ENCODE measurements at regions of chr15 and their contacts with region 1.

Region 1: GRCh38 chr15:78065284-78065872 is 12.1 kb downstream of the TBC1D2B start:
- DNase-seq: no peak
- ATAC-seq: no peak
- H3K4me3 Mint-ChIP-seq: no peak overlapping the region
- H3K27ac Mint-ChIP-seq: no peak overlapping the region
- H3K4me1 Mint-ChIP-seq: peaks cover 11% of the 10 kb centered on the region
- H3K27me3 Mint-ChIP-seq: no peaks in the 10 kb centered on the region
- CTCF ChIP-seq: no peak

Region 2: DNA sequence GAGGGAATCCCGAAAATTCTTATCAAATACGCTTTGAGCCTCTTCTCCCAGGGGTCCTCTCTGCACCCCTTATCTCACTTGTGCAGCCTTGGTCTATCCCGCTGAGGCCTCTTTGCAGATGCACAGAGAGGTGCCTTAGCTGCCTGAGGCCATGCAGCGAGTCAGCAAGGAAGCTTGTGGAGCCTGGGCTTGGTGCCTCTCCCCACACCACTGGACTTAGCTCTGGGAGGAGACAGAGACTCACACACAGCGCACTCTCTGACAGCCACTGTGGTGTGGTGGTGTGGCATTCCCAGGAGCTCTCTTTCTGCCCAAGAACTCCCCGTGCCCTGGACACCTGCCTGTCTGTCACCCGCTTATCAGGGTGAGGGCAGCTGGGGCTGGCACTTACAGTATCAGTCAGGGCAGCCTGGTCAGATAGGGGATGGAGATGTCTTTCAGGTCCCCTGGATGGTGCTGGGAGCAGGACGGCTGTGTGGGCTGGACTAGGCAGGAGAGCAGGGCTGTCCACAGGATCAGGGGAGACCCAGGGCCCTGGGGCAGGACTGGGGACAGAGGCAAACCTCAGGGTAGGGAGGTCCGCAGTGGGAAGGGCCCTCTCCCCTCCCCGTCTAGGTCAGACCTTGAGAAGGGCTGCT is 422.5 kb before region 1 on chr15:
- CTCF ChIA-PET with region 1: no interaction called
- POLR2A ChIA-PET with region 1: no interaction called
- intact Hi-C with region 1: no loop called
- DNase-seq: no peak
- ATAC-seq: no peak
- H3K4me3 Mint-ChIP-seq: no peak overlapping the region
- H3K27ac Mint-ChIP-seq: no peak overlapping the region
- H3K4me1 Mint-ChIP-seq: no peaks in the 10 kb centered on the region
- H3K27me3 Mint-ChIP-seq: peaks cover 3% of the 10 kb centered on the region
- CTCF ChIP-seq: no peak

Region 3: GRCh38 chr15:78040653-78041244 is 24.6 kb before region 1 on chr15:
- CTCF ChIA-PET with region 1: interaction called, 44 read pairs
- POLR2A ChIA-PET with region 1: interaction called, 31 read pairs
- intact Hi-C with region 1: loop called (anchors 2 kb)
- DNase-seq: no peak
- ATAC-seq: no peak
- H3K4me3 Mint-ChIP-seq: no peak overlapping the region
- H3K27ac Mint-ChIP-seq: peak overlapping the region; percentile 86
- H3K4me1 Mint-ChIP-seq: peaks cover 92% of the 10 kb centered on the region
- H3K27me3 Mint-ChIP-seq: no peaks in the 10 kb centered on the region
- CTCF ChIP-seq: no peak

Region 4: DNA sequence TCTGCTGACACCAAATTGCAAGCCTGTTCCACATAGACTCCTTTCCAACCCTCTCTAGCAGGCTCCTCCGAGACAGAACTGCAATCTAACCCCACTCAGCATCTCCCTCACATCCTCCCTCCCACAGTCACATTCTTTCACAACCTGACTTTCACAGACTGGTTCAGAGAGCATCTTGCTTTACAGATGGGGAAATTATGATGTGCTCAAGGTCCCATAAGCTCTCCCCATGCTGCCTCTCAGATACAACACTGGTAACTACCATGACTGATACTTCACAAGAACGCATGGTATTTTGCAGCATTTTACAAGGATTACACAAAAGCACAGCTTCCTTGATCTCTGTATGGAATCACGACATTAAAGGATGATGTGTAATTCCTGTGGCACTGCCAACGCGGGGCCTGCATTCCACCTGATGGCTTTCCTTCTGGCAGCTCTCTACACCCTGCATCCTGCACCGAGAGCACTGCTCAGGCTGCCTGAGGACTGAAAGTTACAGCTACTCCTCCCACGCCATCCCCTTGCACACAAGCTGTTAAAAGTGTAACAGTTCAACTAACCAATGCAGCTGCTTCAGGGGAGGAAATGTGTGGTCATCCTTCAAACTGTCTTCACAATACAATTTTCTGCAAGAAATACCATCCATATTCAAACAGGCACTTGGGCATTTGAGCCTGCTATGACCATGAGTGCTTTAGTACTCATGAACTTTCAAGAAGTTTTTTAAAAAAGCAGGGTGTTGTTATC is 15.5 kb before region 1 on chr15:
- CTCF ChIA-PET with region 1: interaction called, 83 read pairs
- POLR2A ChIA-PET with region 1: interaction called, 7 read pairs
- intact Hi-C with region 1: no loop called
- DNase-seq: peak; percentile 94
- ATAC-seq: peak; percentile 78
- H3K4me3 Mint-ChIP-seq: peak overlapping the region; percentile 41
- H3K27ac Mint-ChIP-seq: peak overlapping the region; percentile 95
- H3K4me1 Mint-ChIP-seq: peaks cover 94% of the 10 kb centered on the region
- H3K27me3 Mint-ChIP-seq: no peaks in the 10 kb centered on the region
- CTCF ChIP-seq: no peak